Activated T-helper 1 cell treated with anti-CD3 and anti-CD28 coated beads, Interleukin-12 subunit alpha, Interleukin-12 subunit beta, Interleukin-2, Interleukin-4 antibody, amounts not matched to agents 30 ng/mL and 10 ng/mL and 1 ng/mL, durations not matched to agents 14 hours and 24 hours and 36 hours (primary cell): ENCODE measurements at regions of chr11 and their contacts with region 1.

Region 1: GRCh38 chr11:117985953-117986887 is at the start of gene IL10RA:
- DNase-seq: peak; percentile 87
- H3K4me3 Mint-ChIP-seq: peak within 1 kb of the TSS; percentile 89
- H3K27ac Mint-ChIP-seq: peak within 1 kb of the TSS; percentile 92
- H3K4me1 Mint-ChIP-seq: peaks cover 79% of the 10 kb centered on the region
- H3K27me3 Mint-ChIP-seq: no peaks in the 10 kb centered on the region
- total RNA-seq, gene IL10RA: 87.8 and 88.3 TPM in 2 replicates

Region 2: GRCh38 chr11:117690484-117691217 is 295.6 kb before region 1 on chr11:
- intact Hi-C with region 1: no loop called
- DNase-seq: no peak
- H3K4me3 Mint-ChIP-seq: no peak overlapping the region
- H3K27ac Mint-ChIP-seq: no peak overlapping the region
- H3K4me1 Mint-ChIP-seq: no peaks in the 10 kb centered on the region
- H3K27me3 Mint-ChIP-seq: peaks cover 7% of the 10 kb centered on the region

Region 3: DNA sequence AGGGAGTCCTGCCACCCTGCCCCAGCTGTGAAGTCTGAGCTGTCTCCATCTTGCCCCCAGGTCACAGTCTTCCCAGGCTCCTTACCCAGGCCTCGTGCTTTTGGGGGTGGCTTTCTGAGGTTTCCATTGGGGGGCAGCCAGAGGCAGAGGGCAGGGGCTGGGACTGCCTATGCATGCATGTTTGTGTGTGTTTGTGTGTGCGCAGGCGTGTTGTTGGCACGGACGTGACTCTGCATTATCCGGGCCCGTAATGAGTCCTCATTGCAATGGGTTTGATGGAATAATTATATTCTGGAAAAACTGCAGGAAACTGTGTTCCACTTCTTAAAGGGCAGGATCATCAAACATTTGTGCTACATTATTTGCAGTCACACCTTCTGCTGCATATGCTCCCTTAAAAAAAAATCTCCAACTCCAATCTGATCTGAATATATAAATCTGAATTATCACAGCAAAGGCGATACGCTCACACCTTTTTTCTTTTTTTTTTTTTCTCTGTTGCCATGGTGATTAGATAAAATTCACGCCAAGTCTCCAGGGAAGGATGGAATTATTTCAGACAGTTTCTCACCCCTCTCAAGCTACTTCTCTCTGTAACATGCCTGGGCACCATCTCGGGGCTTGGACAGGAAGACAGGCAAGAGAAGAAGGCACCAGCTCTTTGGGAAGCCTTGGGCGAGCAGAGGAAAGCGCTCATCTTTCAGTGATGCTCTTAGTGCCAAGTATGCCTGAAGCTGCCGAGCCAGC is 235.1 kb before region 1 on chr11:
- intact Hi-C with region 1: no loop called
- DNase-seq: no peak
- H3K4me3 Mint-ChIP-seq: no peak overlapping the region
- H3K27ac Mint-ChIP-seq: no peak overlapping the region
- H3K4me1 Mint-ChIP-seq: no peaks in the 10 kb centered on the region
- H3K27me3 Mint-ChIP-seq: peaks cover 4% of the 10 kb centered on the region

Region 4: GRCh38 chr11:117817368-117818040 is 168.7 kb before region 1 on chr11:
- intact Hi-C with region 1: loop called (anchors 1 kb)
- DNase-seq: peak; percentile 83
- H3K4me3 Mint-ChIP-seq: peak overlapping the region; percentile 70
- H3K27ac Mint-ChIP-seq: peak overlapping the region; percentile 98
- H3K4me1 Mint-ChIP-seq: peaks cover 79% of the 10 kb centered on the region
- H3K27me3 Mint-ChIP-seq: no peaks in the 10 kb centered on the region

Region 5: DNA sequence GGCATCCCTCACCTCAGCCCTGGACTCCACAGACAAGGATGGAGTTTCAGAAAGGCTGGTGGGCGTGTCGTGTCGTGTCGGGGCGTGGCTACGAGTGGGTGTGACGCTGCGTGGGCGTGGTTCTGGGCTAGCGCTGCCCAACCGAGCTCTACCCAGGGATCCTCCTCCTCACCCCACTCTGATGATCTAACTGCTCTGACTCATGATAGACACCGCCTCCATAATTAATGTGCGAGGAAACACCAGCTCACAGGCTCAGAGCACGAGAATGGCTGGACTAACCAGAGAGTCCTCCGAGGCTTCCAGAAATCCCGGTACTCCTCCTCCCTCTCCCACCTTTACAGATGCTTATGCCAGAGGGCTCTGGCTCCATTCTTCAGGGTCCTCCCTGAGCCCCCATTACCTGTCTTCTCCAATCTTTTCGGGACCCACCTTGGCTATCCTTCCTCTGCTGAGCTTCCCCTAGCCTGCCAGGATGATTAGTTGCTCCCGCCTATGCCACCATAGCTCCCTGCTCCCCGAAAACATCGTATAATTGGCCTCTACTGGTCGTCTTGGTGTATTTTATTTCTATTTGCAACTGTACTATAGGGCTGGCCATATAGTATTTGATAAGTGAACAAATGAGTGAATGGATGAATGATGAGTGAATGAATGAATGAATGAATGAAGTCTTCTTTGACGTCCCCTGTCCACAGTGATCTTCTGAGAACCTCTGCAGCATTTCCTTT is 78.8 kb before region 1 on chr11:
- intact Hi-C with region 1: loop called (anchors 2 kb)
- DNase-seq: peak; percentile 68
- H3K4me3 Mint-ChIP-seq: peak overlapping the region; percentile 68
- H3K27ac Mint-ChIP-seq: peak overlapping the region; percentile 67
- H3K4me1 Mint-ChIP-seq: peaks cover 12% of the 10 kb centered on the region
- H3K27me3 Mint-ChIP-seq: no peaks in the 10 kb centered on the region

Region 6: DNA sequence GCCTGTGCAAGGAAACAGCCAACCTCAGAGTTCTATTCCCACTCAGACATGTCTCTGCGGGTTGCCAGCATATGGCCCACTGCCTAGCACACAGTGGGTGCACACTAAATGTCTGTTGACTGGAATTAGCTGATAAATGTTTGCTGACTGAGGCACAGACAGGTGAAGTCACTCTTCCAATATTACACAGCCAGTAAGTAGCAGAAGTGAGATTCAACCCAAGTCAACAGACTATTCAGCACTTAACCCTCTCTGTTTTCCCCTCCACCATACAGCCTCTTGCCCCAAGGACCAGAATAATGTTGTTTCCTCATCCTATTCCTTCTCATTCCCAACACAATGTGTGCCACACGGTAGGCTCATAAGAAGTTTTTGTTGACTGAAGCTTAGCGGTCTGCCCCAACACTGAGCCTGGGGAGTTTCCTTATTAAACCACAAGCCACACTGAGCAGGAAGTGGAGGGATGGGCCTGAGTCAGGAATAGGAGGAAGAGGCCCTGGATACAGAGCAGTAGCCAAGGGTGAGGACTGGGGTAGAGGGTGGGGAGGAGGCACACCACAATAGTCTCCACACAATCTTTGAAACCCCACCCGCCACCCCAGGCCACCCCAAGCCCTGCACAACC is 15.7 kb before region 1 on chr11:
- intact Hi-C with region 1: loop called (anchors 1 kb)
- DNase-seq: peak; percentile 43
- H3K4me3 Mint-ChIP-seq: peak overlapping the region; percentile 57
- H3K27ac Mint-ChIP-seq: peak overlapping the region; percentile 83
- H3K4me1 Mint-ChIP-seq: peaks cover 66% of the 10 kb centered on the region
- H3K27me3 Mint-ChIP-seq: no peaks in the 10 kb centered on the region

Region 7: DNA sequence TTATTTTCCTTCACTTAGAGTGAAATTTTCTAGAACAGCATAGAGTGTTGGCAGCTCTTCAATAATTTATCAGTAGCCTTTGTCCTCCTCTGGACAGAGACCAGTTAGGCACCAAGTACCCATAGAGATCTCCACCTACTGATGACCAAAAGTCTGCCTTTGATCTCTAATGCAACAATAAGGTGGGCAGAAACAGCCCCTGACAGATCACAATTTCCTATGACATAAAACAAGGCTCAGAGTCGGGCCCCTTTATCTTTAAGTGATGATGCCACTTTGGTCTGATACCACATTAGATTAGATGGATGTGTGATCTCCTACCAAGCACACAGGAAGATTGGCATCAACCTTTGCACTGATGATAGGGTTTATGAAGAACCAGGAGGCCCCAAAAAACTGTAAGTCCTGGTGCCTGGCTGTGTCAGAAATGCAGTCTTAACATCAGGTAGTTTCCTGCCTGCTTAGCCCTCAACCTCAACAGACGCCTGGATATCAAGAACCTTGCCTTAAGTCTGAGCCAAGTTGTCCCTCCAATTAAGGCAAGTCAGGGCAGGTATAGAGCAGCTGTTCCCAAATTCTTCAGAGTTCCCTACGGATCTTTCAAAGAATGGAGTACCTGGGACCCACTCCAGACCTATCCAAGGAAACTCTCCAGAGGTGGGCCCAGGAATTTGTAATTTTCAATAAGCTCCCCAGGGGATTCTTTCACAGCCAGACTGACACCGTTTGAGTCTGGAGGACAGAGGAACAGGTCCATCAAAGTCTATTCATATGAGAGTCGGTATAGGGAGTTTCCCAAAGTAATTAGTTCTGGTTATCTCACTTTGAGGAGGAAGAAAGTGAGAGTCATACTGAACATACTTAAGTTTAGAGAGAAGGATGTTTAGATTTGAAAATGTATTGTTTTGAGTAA is 60.1 kb after region 1 on chr11:
- intact Hi-C with region 1: loop called (anchors 1 kb)
- DNase-seq: peak; percentile 12
- H3K4me3 Mint-ChIP-seq: peak overlapping the region; percentile 52
- H3K27ac Mint-ChIP-seq: peak overlapping the region; percentile 93
- H3K4me1 Mint-ChIP-seq: peaks cover 86% of the 10 kb centered on the region
- H3K27me3 Mint-ChIP-seq: no peaks in the 10 kb centered on the region

Region 8: DNA sequence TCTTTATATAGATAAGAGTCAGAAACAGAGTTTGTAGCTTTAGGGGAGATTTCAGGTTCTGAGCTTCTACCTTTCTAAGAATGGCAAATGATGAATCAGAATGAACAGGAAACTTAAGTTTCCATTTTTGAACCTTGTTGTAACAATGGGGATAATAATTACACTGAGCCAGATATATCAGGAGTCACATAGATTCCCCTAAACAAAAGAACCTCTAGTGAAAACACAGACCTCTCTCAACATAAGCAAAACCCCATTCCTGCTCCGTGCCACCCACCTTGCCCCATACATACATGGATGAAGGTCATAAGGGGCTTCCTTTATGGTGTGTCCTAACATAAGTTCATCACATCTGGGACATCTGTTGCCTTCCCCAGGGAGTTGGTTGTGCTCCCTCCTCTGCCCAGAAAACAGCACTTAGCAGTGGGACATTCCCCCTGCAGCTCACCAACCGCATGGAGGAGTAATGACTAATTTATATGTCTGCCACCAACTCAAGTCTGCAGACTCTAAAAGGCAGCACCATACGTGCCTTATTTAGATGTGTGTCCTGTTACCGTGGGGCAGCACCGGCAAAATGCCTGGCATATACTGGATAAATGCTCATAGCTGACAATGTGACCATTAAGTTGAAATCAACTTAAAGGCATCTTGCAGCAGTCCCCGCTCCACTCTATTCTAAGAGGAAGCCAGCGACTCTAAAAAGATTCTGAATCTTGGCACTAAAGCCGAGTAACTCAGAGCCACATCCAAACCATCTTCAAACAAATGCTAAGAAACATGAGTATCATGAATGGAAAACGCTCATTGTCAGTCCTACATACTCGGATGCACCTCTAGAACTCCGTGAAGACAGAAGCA is 230.6 kb after region 1 on chr11:
- intact Hi-C with region 1: loop called (anchors 2 kb)
- DNase-seq: peak; percentile 41
- H3K4me3 Mint-ChIP-seq: peak overlapping the region; percentile 83
- H3K27ac Mint-ChIP-seq: peak overlapping the region; percentile 94
- H3K4me1 Mint-ChIP-seq: peaks cover 97% of the 10 kb centered on the region
- H3K27me3 Mint-ChIP-seq: no peaks in the 10 kb centered on the region

Region 9: GRCh38 chr11:118448294-118448693 is 462.1 kb after region 1 on chr11:
- intact Hi-C with region 1: loop called (anchors 5 kb)
- DNase-seq: no peak
- H3K4me3 Mint-ChIP-seq: peak overlapping the region; percentile 6
- H3K27ac Mint-ChIP-seq: peak overlapping the region; percentile 22
- H3K4me1 Mint-ChIP-seq: peaks cover 73% of the 10 kb centered on the region
- H3K27me3 Mint-ChIP-seq: no peaks in the 10 kb centered on the region